Activated naive CD4-positive, alpha-beta T cell treated with anti-CD3 and anti-CD28 coated beads, Interleukin-2, amount 10 ng/mL, durations not matched to agents 7 days and 5 days (primary cell): ENCODE measurements at regions of chr17 and their contacts with region 1.

Region 1: DNA sequence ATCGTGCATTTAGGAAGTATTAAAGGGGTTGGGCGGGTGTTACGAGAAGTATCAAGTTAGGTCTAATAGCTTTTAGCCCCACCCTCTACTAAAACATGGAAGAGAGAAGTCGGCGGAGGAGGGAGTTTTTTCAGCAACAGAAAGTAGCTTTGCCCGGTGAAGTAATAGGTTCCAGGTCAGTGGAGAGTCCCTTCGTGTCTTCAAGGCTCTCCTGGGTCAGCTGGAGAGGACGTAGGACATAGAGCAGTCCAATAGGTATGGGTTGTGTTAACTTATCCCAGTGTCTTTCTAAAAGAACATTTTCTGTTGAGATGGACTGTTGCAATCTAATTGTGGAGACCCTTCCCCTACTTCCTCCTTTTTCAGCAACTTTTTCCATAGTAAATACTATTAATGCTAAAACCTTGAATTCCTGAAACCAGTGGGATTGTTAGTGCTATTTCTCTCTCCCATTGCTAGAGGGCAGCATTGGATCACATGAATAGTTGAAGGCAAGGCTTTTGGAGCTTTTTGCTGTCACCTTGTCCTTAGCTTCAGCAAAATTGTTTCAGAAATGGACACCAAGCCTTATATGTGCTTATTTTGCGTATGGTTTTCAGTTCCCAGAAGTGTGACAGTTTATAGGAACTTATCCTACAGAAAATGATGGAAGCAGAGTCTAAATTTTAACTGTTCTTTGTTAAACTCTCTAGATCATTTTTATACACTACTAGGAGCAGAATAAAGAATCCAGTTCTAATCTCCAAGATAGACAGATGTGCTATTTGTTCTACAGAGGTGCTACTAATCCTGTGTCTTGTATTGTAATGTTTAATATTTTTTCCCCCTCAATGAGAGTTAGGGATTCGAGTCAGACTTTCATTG is 38.4 kb downstream of the UTP18 start:
- DNase-seq: no peak
- H3K4me3 Mint-ChIP-seq: no peak overlapping the region
- H3K27ac Mint-ChIP-seq: no peak overlapping the region
- H3K4me1 Mint-ChIP-seq: no peaks in the 10 kb centered on the region
- H3K27me3 Mint-ChIP-seq: no peaks in the 10 kb centered on the region

Region 2: GRCh38 chr17:51166197-51166986 is 132.3 kb before region 1 on chr17 and contains the start of gene NME2:
- CTCF ChIA-PET with region 1: no interaction called
- DNase-seq: peak; percentile 76
- H3K4me3 Mint-ChIP-seq: peak within 1 kb of the TSS; percentile 96
- H3K27ac Mint-ChIP-seq: peak within 1 kb of the TSS; percentile 97
- H3K4me1 Mint-ChIP-seq: peaks cover 35% of the 10 kb centered on the region
- H3K27me3 Mint-ChIP-seq: peaks cover 4% of the 10 kb centered on the region

Region 3: DNA sequence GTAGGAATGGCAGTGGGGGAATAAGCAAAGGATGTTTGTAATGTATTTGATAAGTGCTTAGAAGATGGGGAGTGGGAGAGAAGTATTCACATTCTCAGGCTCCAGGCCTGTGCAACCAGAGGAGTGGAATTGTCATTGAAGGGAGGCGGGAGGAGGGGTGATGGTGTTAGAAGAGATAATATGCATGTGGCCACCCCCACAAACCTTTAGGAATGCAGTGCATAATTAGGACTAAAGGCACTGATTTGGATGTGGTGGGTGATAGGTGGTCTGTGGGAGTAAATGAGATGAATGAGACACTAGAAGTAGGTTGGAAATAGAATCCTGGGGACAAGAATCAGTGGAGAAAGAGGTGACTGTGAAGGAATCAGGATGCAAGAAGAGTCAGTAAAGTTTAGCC is 11.3 kb before region 1 on chr17:
- CTCF ChIA-PET with region 1: interaction called, 22 read pairs
- DNase-seq: no peak
- H3K4me3 Mint-ChIP-seq: no peak overlapping the region
- H3K27ac Mint-ChIP-seq: no peak overlapping the region
- H3K4me1 Mint-ChIP-seq: peaks cover 4% of the 10 kb centered on the region
- H3K27me3 Mint-ChIP-seq: no peaks in the 10 kb centered on the region

Region 4: DNA sequence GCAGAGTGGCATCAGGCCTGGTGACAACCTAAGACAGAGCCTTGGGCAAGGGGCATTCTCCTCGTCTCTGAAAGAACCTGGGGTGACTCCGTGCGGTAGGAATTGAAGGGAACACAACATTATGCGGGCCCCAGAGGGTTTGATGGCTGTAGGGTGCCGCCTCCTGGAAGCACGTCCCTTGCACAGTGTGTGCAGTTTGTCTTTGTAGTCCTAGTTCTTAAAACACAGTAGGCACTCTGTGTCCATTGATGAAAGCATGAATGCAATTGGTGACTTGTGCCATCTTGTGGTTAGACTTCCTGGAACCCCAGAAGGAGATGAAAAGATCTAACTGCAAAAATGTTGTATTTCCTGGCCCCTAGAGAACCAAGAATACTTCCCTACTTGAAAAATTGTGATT is 241.4 kb after region 1 on chr17:
- CTCF ChIA-PET with region 1: interaction called, 10 read pairs
- DNase-seq: peak; percentile 29
- H3K4me3 Mint-ChIP-seq: no peak overlapping the region
- H3K27ac Mint-ChIP-seq: peak overlapping the region; percentile 29
- H3K4me1 Mint-ChIP-seq: peaks cover 17% of the 10 kb centered on the region
- H3K27me3 Mint-ChIP-seq: no peaks in the 10 kb centered on the region